CD8-positive, alpha-beta T cell (primary cell): ENCODE measurements at regions of chr12 and their contacts with region 1.

Region 1: GRCh38 chr12:75480469-75480949 is at the start of gene GLIPR1:
- DNase-seq: peak; percentile 43 to 89 (median 76)
- ATAC-seq: peak; percentile 79
- H3K4me3 ChIP-seq: peak within 1 kb of the TSS; percentile 51 to 60
- H3K4me3 Mint-ChIP-seq: peak within 1 kb of the TSS; percentile 98
- H3K27ac ChIP-seq: peak within 1 kb of the TSS; percentile 69 to 92
- H3K27ac Mint-ChIP-seq: peak within 1 kb of the TSS; percentile 98
- H3K4me1 ChIP-seq: peaks cover 57% of the 10 kb centered on the region
- H3K4me1 Mint-ChIP-seq: peaks cover 81% of the 10 kb centered on the region
- H3K27me3 ChIP-seq: no peaks in the 10 kb centered on the region
- H3K27me3 Mint-ChIP-seq: no peaks in the 10 kb centered on the region
- CTCF ChIP-seq: no peak
- total RNA-seq, gene GLIPR1: 20.8 to 23.1 TPM

Region 2: GRCh38 chr12:75334384-75335030 is 146.0 kb before region 1 on chr12 and contains the start of gene GLIPR1L1:
- CTCF ChIA-PET with region 1: interaction called, 10 read pairs
- POLR2A ChIA-PET with region 1: no interaction called
- intact Hi-C with region 1: loop called in 1 of 2 experiments (anchors 1 kb)
- DNase-seq: peak; percentile 69 to 88 (median 84)
- ATAC-seq: peak; percentile 81
- H3K4me3 ChIP-seq: peak within 1 kb of the TSS; percentile 28 to 34
- H3K4me3 Mint-ChIP-seq: peak within 1 kb of the TSS; percentile 62
- H3K27ac ChIP-seq: no peak within 1 kb of the TSS
- H3K27ac Mint-ChIP-seq: no peak within 1 kb of the TSS
- H3K4me1 ChIP-seq: peaks cover 11% of the 10 kb centered on the region
- H3K4me1 Mint-ChIP-seq: peaks cover 15% of the 10 kb centered on the region
- H3K27me3 ChIP-seq: peaks cover 0 to 4% of the 10 kb centered on the region in 2 experiments
- H3K27me3 Mint-ChIP-seq: peaks cover 24% of the 10 kb centered on the region
- CTCF ChIP-seq: peak; percentile 89
- total RNA-seq, gene GLIPR1L1: not detected

Region 3: GRCh38 chr12:75437564-75437963 is 42.9 kb before region 1 on chr12:
- CTCF ChIA-PET with region 1: interaction called, 38 read pairs
- POLR2A ChIA-PET with region 1: interaction called, 5 read pairs
- intact Hi-C with region 1: loop called (anchors 2 to 5 kb)
- DNase-seq: peak in 2 of 9 experiments; percentile 67 to 72
- ATAC-seq: peak; percentile 78
- H3K4me3 ChIP-seq: no peak overlapping the region
- H3K4me3 Mint-ChIP-seq: no peak overlapping the region
- H3K27ac ChIP-seq: no peak overlapping the region
- H3K27ac Mint-ChIP-seq: no peak overlapping the region
- H3K4me1 ChIP-seq: no peaks in the 10 kb centered on the region
- H3K4me1 Mint-ChIP-seq: no peaks in the 10 kb centered on the region
- H3K27me3 ChIP-seq: no peaks in the 10 kb centered on the region
- H3K27me3 Mint-ChIP-seq: peaks cover 9% of the 10 kb centered on the region
- CTCF ChIP-seq: peak; percentile 32

Region 4: GRCh38 chr12:75459755-75460154 is 20.8 kb before region 1 on chr12:
- CTCF ChIA-PET with region 1: interaction called, 16 read pairs
- POLR2A ChIA-PET with region 1: interaction called, 7 read pairs
- intact Hi-C with region 1: loop called in 1 of 2 experiments (anchors 2 kb)
- DNase-seq: no peak
- ATAC-seq: no peak
- H3K4me3 ChIP-seq: no peak overlapping the region
- H3K4me3 Mint-ChIP-seq: no peak overlapping the region
- H3K27ac ChIP-seq: no peak overlapping the region
- H3K27ac Mint-ChIP-seq: no peak overlapping the region
- H3K4me1 ChIP-seq: peaks cover 28% of the 10 kb centered on the region
- H3K4me1 Mint-ChIP-seq: peaks cover 43% of the 10 kb centered on the region
- H3K27me3 ChIP-seq: no peaks in the 10 kb centered on the region
- H3K27me3 Mint-ChIP-seq: no peaks in the 10 kb centered on the region
- CTCF ChIP-seq: no peak

Region 5: GRCh38 chr12:75511116-75512048 is 30.9 kb after region 1 on chr12 and contains the start of gene KRR1:
- CTCF ChIA-PET with region 1: interaction called, 35 read pairs
- POLR2A ChIA-PET with region 1: interaction called, 26 read pairs
- intact Hi-C with region 1: loop called (anchors 1 to 2 kb)
- DNase-seq: peak; percentile 75 to 98 (median 88)
- ATAC-seq: peak; percentile 95
- H3K4me3 ChIP-seq: peak within 1 kb of the TSS; percentile 89 to 93
- H3K4me3 Mint-ChIP-seq: peak within 1 kb of the TSS; percentile 98
- H3K27ac ChIP-seq: peak within 1 kb of the TSS; percentile 89
- H3K27ac Mint-ChIP-seq: peak within 1 kb of the TSS; percentile 98
- H3K4me1 ChIP-seq: peaks cover 18% of the 10 kb centered on the region
- H3K4me1 Mint-ChIP-seq: peaks cover 33% of the 10 kb centered on the region
- H3K27me3 ChIP-seq: no peaks in the 10 kb centered on the region
- H3K27me3 Mint-ChIP-seq: no peaks in the 10 kb centered on the region
- CTCF ChIP-seq: no peak
- total RNA-seq, gene KRR1: 158 to 161 TPM

Region 6: GRCh38 chr12:75862692-75863471 is 382.4 kb after region 1 on chr12:
- CTCF ChIA-PET with region 1: no interaction called
- POLR2A ChIA-PET with region 1: no interaction called
- intact Hi-C with region 1: no loop called
- DNase-seq: no peak
- ATAC-seq: no peak
- H3K4me3 ChIP-seq: no peak overlapping the region
- H3K4me3 Mint-ChIP-seq: no peak overlapping the region
- H3K27ac ChIP-seq: no peak overlapping the region
- H3K27ac Mint-ChIP-seq: no peak overlapping the region
- H3K4me1 ChIP-seq: no peaks in the 10 kb centered on the region
- H3K4me1 Mint-ChIP-seq: no peaks in the 10 kb centered on the region
- H3K27me3 ChIP-seq: no peaks in the 10 kb centered on the region
- H3K27me3 Mint-ChIP-seq: no peaks in the 10 kb centered on the region
- CTCF ChIP-seq: no peak

Region 7: GRCh38 chr12:76559400-76560085 is 1079.0 kb after region 1 on chr12 and contains the start of gene OSBPL8:
- CTCF ChIA-PET with region 1: no interaction called
- POLR2A ChIA-PET with region 1: interaction called, 6 read pairs
- intact Hi-C with region 1: loop called in 1 of 2 experiments (anchors 1 kb)
- DNase-seq: peak; percentile 94 to 99 (median 96)
- ATAC-seq: peak; percentile 67
- H3K4me3 ChIP-seq: peak within 1 kb of the TSS; percentile 79 to 92
- H3K4me3 Mint-ChIP-seq: peak within 1 kb of the TSS; percentile 96
- H3K27ac ChIP-seq: peak within 1 kb of the TSS; percentile 91 to 98
- H3K27ac Mint-ChIP-seq: peak within 1 kb of the TSS; percentile 96
- H3K4me1 ChIP-seq: peaks cover 40% of the 10 kb centered on the region
- H3K4me1 Mint-ChIP-seq: peaks cover 40% of the 10 kb centered on the region
- H3K27me3 ChIP-seq: no peaks in the 10 kb centered on the region
- H3K27me3 Mint-ChIP-seq: no peaks in the 10 kb centered on the region
- CTCF ChIP-seq: no peak
- total RNA-seq, gene OSBPL8: 112 to 115 TPM